Stomach (tissue), 19 donors: ENCODE measurements at regions of chr19 and their contacts with region 1.

Region 1: GRCh38 chr19:54172471-54173358 is at the start of gene TMC4:
- DNase-seq: peak; percentile 88 to 94
- H3K4me3 ChIP-seq: peak within 1 kb of the TSS; percentile 42 to 59 (median 48)
- H3K27ac ChIP-seq: peak within 1 kb of the TSS; percentile 80 to 88 (median 82)
- H3K4me1 ChIP-seq: peaks cover 9 to 26% (median 20%) of the 10 kb centered on the region in 4 donors
- H3K27me3 ChIP-seq: peaks cover 0 to 17% (median 4%) of the 10 kb centered on the region in 3 donors
- CTCF ChIP-seq: peak in 4 of 7 experiments; percentile 42 to 75 (median 59)
- EP300 ChIP-seq: no peak
- POLR2A ChIP-seq: no peak
- total RNA-seq, gene TMC4: 28.0 to 99.5 (median 47.1) TPM

Region 2: DNA sequence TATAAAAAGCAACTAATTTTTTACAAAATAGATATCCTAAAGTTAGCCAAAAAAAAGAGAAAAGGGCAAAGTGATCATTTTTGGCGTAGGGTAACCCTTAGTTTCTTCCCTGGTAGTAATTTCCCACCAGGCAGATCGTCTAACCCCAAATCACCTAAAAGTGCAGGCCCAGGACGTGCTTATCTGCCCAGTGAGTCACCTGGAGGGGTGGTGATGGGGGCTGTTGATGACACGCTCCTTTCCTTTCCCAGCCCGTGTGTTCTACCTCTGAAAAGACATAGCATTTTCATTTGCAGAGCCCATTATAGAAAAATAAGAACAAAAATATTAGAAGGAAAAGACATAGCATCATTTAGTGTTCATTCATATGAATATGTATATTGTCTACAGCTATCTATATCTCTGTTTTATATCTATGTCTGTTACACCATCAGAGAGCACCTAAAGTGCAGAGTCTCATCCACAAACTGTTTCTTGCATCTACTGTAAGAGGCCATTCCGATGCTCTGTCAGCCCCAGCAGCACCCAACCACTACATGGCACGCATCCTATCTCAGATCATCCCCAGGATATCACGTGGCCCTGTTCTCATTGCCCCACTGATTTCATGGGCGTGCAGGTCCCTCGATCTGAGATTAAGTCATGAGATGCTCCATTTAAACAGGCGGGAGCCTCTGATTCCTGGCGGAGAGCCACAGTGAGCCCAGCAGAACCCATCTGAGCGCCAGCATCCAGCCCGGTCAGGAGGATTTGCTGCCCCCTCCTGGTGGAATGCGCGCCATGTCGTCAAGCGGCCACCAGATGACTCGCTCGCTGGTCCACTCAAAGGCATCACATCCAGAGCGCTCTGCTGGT is 58.6 kb after region 1 on chr19:
- intact Hi-C with region 1: loop called (anchors 5 kb)
- DNase-seq: peak; percentile 92 to 94
- H3K4me3 ChIP-seq: no peak overlapping the region
- H3K27ac ChIP-seq: no peak overlapping the region
- H3K4me1 ChIP-seq: peaks cover 0 to 12% (median 3%) of the 10 kb centered on the region in 4 donors
- H3K27me3 ChIP-seq: peaks cover 0 to 31% (median 10%) of the 10 kb centered on the region in 3 donors
- CTCF ChIP-seq: peak in 5 of 7 experiments; percentile 81 to 90 (median 90)
- EP300 ChIP-seq: no peak
- POLR2A ChIP-seq: no peak

Region 3: DNA sequence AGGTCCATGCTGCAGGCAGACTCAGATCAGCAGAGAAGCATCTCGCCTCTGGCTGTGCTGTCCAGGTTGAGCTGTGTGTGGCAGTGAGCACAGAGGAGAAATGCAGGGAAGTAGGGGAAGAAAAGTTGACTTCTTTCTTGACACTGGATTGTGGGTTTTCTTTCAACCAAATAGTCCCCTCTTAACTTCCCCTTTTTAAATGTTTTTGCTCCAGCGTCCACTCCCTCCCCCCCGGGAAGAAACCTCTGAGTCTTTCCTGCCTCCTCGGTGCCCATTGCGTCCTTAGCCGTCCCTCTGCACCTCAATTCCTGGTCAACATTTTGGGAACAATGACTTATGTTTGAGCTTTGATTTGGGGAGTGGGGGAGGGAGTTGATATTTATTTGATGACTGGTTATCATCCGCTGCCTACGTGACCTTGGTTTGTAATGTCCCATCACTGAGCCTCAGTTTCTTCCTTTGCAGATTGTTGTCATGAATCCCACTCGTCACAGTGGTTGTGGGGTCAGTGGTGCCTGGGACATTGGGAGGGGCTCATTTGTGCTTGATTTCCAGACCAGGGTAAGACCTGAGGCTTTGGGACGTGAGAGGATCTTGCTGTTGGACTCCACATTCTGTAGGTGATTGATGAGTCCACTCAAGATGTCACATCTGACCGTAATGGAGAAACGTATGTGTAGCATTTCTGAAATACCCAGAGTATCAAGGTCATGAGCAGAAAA is 108.5 kb after region 1 on chr19 and contains the start of gene LILRB2:
- intact Hi-C with region 1: no loop called
- DNase-seq: no peak
- H3K4me3 ChIP-seq: peak within 1 kb of the TSS in 3 of 4 donors; percentile 17 to 36 (median 22)
- H3K27ac ChIP-seq: peak within 1 kb of the TSS in 2 of 5 donors; percentile 60 to 66
- H3K4me1 ChIP-seq: no peaks in the 10 kb centered on the region
- H3K27me3 ChIP-seq: peaks cover 0 to 64% (median 9%) of the 10 kb centered on the region in 3 donors
- CTCF ChIP-seq: no peak
- EP300 ChIP-seq: no peak
- POLR2A ChIP-seq: no peak
- total RNA-seq, gene LILRB2: 0.87 to 2.2 (median 1.2) TPM in 4 of 5 donors, not detected in the other